ENCODE measurements at regions of chr10 and their contacts with region 1.

Region 1: GRCh38 chr10:102167861-102168260 is 15.7 kb downstream of the NOLC1 start:
- DNase-seq: no peak
- ATAC-seq: no peak
- H3K4me3 ChIP-seq: no peak overlapping the region
- H3K4me3 Mint-ChIP-seq: no peak overlapping the region
- H3K27ac ChIP-seq: no peak overlapping the region
- H3K27ac Mint-ChIP-seq: no peak overlapping the region
- H3K4me1 ChIP-seq: peaks cover 4% of the 10 kb centered on the region
- H3K4me1 Mint-ChIP-seq: peaks cover 6% of the 10 kb centered on the region
- H3K27me3 ChIP-seq: peaks cover 0 to 3% of the 10 kb centered on the region in 2 experiments
- H3K27me3 Mint-ChIP-seq: no peaks in the 10 kb centered on the region
- CTCF ChIP-seq: no peak

Region 2: DNA sequence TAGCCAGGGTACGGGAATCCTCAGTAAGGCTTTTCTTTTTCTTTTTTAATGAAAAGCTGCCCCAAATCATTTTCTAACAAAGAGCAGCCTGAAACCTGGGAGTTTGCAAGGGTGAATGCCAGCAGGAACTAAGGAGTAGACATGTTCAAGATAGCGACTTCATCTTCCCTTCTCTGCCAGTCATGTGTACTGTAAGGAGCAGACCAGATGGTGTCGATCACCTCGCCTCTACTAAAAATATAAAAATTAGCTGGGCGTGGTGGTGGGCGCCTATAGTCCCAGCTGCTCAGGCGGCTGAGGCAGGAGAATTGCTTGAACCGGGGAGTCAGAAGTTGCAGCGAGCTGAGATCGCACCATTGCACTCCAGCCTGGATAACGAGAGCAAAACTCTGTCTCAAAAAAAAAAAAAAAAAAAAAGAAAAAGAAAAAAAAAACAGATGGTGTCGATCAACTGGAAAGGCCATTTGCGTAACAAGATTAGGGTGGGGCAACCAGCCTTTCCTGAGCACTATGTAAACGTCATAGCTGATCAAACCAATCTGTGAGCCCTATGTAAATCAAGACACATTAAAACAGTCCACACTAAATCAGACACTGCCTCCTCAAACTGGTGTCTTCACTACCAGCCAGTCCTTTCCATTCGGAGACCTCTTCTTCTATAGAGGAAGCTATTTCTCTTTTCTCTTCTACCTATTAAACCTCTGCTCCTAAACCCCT is 18.1 kb after region 1 on chr10:
- CTCF ChIA-PET with region 1: interaction called, 14 read pairs
- POLR2A ChIA-PET with region 1: interaction called, 3 read pairs
- intact Hi-C with region 1: no loop called
- DNase-seq: no peak
- ATAC-seq: no peak
- H3K4me3 ChIP-seq: no peak overlapping the region
- H3K4me3 Mint-ChIP-seq: no peak overlapping the region
- H3K27ac ChIP-seq: no peak overlapping the region
- H3K27ac Mint-ChIP-seq: no peak overlapping the region
- H3K4me1 ChIP-seq: peaks cover 6% of the 10 kb centered on the region
- H3K4me1 Mint-ChIP-seq: peaks cover 11% of the 10 kb centered on the region
- H3K27me3 ChIP-seq: no peaks in the 10 kb centered on the region
- H3K27me3 Mint-ChIP-seq: no peaks in the 10 kb centered on the region
- CTCF ChIP-seq: no peak